Activated CD4-positive, alpha-beta T cell treated with anti-CD3 and anti-CD28 coated beads for 36 hours (primary cell): ENCODE measurements at regions of chrX and their contacts with region 1.

Region 1: DNA sequence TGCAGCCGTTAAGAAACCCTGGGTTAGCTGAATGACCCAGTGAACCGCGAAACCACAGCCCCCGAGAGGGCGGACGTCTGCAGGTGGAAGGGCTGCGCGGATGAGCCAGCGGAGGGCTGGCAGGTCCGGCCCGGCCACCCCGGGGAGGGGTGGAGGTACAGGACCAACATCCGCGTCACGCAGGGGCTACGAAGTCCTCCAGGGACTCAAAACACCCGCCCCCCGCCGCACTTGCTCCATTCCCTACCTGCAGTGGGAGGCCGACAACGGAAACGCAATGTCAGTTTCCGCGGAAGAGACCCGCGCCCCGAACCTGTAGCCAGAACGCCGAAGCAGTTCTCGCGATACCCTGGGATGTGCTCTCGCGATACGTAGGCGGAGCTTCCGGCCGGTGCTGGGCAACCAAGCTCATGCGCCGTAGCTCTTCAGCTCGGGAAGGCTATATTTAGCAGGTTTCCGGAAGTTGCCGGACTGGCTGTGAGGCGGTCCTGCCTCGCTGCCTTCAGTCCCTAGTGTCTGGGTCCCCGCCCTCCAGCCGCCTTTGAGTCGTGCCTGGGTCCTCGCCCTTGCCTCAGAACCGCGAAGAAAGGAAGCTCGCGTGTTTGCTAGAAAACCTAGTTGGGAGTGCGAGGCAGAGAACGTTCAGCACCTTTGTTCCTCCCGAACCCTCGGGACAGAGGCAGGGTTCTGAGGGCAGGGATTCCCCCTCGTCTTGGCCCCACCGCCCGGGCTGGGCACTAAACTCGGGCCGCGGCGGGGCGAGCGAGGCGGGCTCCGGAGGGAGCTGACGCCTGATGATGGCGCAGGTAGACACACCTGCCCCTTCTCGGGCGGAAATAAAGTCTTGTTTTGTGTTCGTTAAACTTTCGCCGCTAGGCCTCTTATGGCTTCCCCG is at the starts of genes OFD1 and TRAPPC2:
- DNase-seq: peak; percentile 93
- ATAC-seq: peak; percentile 95
- H3K4me3 Mint-ChIP-seq: peak within 1 kb of the TSS; percentile 81
- H3K27ac Mint-ChIP-seq: peak within 1 kb of the TSS; percentile 93
- H3K4me1 Mint-ChIP-seq: peaks cover 42% of the 10 kb centered on the region
- H3K27me3 Mint-ChIP-seq: no peaks in the 10 kb centered on the region
- total RNA-seq, gene OFD1: 28.0 to 32.4 TPM
- total RNA-seq, gene TRAPPC2: 10.3 to 16.4 TPM

Region 2: DNA sequence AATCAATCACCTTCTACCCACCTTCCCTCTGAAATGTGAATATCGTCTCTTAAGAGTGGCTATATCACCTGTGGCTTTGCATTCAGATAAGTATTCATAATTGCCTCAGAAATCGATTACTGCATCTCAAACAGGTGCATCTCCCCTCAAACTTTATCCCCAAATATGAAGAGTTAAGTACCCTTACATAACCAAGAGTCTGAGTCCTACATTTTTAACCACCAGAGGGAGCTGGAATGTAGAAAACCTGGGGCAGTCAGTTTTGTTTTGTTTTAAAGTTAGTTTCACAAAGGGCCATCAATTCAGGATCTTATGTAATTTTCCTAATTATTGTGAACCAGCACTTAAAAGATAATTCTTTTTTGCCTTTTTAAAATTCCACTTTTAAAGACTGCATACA is 75.9 kb before region 1 on chrX:
- CTCF ChIA-PET with region 1: no interaction called
- POLR2A ChIA-PET with region 1: no interaction called
- intact Hi-C with region 1: loop called (anchors 1 kb)
- DNase-seq: no peak
- ATAC-seq: no peak
- H3K4me3 Mint-ChIP-seq: no peak overlapping the region
- H3K27ac Mint-ChIP-seq: no peak overlapping the region
- H3K4me1 Mint-ChIP-seq: peaks cover 36% of the 10 kb centered on the region
- H3K27me3 Mint-ChIP-seq: no peaks in the 10 kb centered on the region

Region 3: GRCh38 chrX:13669246-13669737 is 65.2 kb before region 1 on chrX:
- CTCF ChIA-PET with region 1: interaction called, 7 read pairs
- POLR2A ChIA-PET with region 1: interaction called, 9 read pairs
- intact Hi-C with region 1: loop called (anchors 1 to 2 kb)
- DNase-seq: peak; percentile 76
- ATAC-seq: peak; percentile 93
- H3K4me3 Mint-ChIP-seq: peak overlapping the region; percentile 51
- H3K27ac Mint-ChIP-seq: peak overlapping the region; percentile 93
- H3K4me1 Mint-ChIP-seq: peaks cover 11% of the 10 kb centered on the region
- H3K27me3 Mint-ChIP-seq: no peaks in the 10 kb centered on the region

Region 4: DNA sequence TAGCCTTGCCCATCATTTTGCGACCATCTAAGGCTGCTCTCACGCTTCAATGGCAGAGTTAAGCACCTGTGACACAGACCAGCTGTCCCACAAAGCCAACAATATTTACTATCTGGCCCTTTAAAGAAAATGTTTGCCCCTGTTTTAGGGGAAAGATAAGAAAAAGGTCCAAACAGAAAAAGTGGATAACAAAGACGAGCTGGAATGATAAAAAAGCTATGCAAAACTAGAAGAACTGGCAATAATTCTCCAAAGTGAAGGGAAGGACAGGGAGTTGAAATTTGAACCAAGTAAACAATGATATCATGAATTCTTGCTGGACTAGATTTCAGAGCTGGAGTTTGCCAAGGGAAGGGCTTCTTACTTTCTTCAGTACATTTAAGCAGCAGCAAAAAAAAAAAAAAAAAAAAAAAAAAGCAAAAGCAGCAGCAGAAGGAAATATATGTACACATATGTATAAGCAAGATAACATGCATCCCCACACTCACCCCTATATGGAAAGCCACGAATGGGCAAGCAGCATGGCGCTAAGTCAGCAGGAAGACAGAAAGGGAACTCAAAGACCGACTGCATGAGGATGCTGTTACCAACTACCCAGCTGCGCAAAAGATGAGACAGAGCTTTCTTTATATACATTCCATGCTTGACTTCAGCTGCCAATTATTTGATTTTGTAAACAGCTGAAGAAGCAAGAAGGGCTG is 12.6 kb before region 1 on chrX:
- CTCF ChIA-PET with region 1: no interaction called
- POLR2A ChIA-PET with region 1: no interaction called
- intact Hi-C with region 1: loop called in 1 of 2 experiments (anchors 1 kb)
- DNase-seq: no peak
- ATAC-seq: no peak
- H3K4me3 Mint-ChIP-seq: no peak overlapping the region
- H3K27ac Mint-ChIP-seq: no peak overlapping the region
- H3K4me1 Mint-ChIP-seq: peaks cover 39% of the 10 kb centered on the region
- H3K27me3 Mint-ChIP-seq: no peaks in the 10 kb centered on the region